ENCODE measurements at regions of chr9 and their contacts with region 1.

Region 1: GRCh38 chr9:32251539-32251938 is 132.9 kb upstream of the ACO1 start:
- DNase-seq: peak; percentile 20 to 35
- H3K4me3 ChIP-seq: no peak overlapping the region
- H3K27ac ChIP-seq: no peak overlapping the region
- H3K4me1 ChIP-seq: no peaks in the 10 kb centered on the region
- H3K27me3 ChIP-seq: no peaks in the 10 kb centered on the region
- CTCF ChIP-seq: peak; percentile 71

Region 2: GRCh38 chr9:31839273-31839672 is 412.3 kb before region 1 on chr9:
- CTCF ChIA-PET with region 1: interaction called, 3 read pairs
- POLR2A ChIA-PET with region 1: no interaction called
- intact Hi-C with region 1: loop called (anchors 2 kb)
- DNase-seq: no peak
- H3K4me3 ChIP-seq: no peak overlapping the region
- H3K27ac ChIP-seq: no peak overlapping the region
- H3K4me1 ChIP-seq: no peaks in the 10 kb centered on the region
- H3K27me3 ChIP-seq: no peaks in the 10 kb centered on the region
- CTCF ChIP-seq: peak; percentile 35; the same call in 1 of the 2 replicates

Region 3: GRCh38 chr9:31908158-31908890 is 343.2 kb before region 1 on chr9:
- CTCF ChIA-PET with region 1: no interaction called
- POLR2A ChIA-PET with region 1: interaction called, 24 read pairs
- intact Hi-C with region 1: no loop called
- DNase-seq: peak; percentile 60 to 82
- H3K4me3 ChIP-seq: no peak overlapping the region
- H3K27ac ChIP-seq: no peak overlapping the region
- H3K4me1 ChIP-seq: peaks cover 11% of the 10 kb centered on the region; the same call in 1 of the 2 replicates
- H3K27me3 ChIP-seq: no peaks in the 10 kb centered on the region
- CTCF ChIP-seq: no peak

Region 4: GRCh38 chr9:32200896-32201295 is 50.6 kb before region 1 on chr9:
- CTCF ChIA-PET with region 1: no interaction called
- POLR2A ChIA-PET with region 1: no interaction called
- intact Hi-C with region 1: no loop called
- DNase-seq: no peak
- H3K4me3 ChIP-seq: no peak overlapping the region
- H3K27ac ChIP-seq: no peak overlapping the region
- H3K4me1 ChIP-seq: no peaks in the 10 kb centered on the region
- H3K27me3 ChIP-seq: no peaks in the 10 kb centered on the region
- CTCF ChIP-seq: no peak

Region 5: GRCh38 chr9:32306006-32306405 is 54.5 kb after region 1 on chr9:
- CTCF ChIA-PET with region 1: no interaction called
- POLR2A ChIA-PET with region 1: no interaction called
- intact Hi-C with region 1: no loop called
- DNase-seq: no peak
- H3K4me3 ChIP-seq: no peak overlapping the region
- H3K27ac ChIP-seq: no peak overlapping the region
- H3K4me1 ChIP-seq: no peaks in the 10 kb centered on the region
- H3K27me3 ChIP-seq: no peaks in the 10 kb centered on the region
- CTCF ChIP-seq: no peak

Region 6: GRCh38 chr9:32832336-32832735 is 580.8 kb after region 1 on chr9:
- CTCF ChIA-PET with region 1: no interaction called
- POLR2A ChIA-PET with region 1: no interaction called
- intact Hi-C with region 1: no loop called
- DNase-seq: no peak
- H3K4me3 ChIP-seq: no peak overlapping the region
- H3K27ac ChIP-seq: no peak overlapping the region
- H3K4me1 ChIP-seq: no peaks in the 10 kb centered on the region
- H3K27me3 ChIP-seq: no peaks in the 10 kb centered on the region
- CTCF ChIP-seq: no peak